BJ (cell line): ENCODE measurements at regions of chr14 and their contacts with region 1.

Region 1: GRCh38 chr14:34310724-34311123 is 151.3 kb downstream of the SPTSSA start:
- DNase-seq: no peak
- H3K4me3 ChIP-seq: no peak overlapping the region
- H3K27me3 ChIP-seq: no peaks in the 10 kb centered on the region
- CTCF ChIP-seq: no peak

Region 2: GRCh38 chr14:34322940-34323418 is 12.3 kb after region 1 on chr14:
- CTCF ChIA-PET with region 1: interaction called, 14 read pairs
- POLR2A ChIA-PET with region 1: no interaction called
- DNase-seq: no peak
- H3K4me3 ChIP-seq: no peak overlapping the region
- H3K27me3 ChIP-seq: peaks cover 2% of the 10 kb centered on the region; the same call in 1 of the 2 replicates
- CTCF ChIP-seq: peak; percentile 77